Spleen (tissue), 13 donors: ENCODE measurements at regions of chr18 and their contacts with region 1.

Region 1: DNA sequence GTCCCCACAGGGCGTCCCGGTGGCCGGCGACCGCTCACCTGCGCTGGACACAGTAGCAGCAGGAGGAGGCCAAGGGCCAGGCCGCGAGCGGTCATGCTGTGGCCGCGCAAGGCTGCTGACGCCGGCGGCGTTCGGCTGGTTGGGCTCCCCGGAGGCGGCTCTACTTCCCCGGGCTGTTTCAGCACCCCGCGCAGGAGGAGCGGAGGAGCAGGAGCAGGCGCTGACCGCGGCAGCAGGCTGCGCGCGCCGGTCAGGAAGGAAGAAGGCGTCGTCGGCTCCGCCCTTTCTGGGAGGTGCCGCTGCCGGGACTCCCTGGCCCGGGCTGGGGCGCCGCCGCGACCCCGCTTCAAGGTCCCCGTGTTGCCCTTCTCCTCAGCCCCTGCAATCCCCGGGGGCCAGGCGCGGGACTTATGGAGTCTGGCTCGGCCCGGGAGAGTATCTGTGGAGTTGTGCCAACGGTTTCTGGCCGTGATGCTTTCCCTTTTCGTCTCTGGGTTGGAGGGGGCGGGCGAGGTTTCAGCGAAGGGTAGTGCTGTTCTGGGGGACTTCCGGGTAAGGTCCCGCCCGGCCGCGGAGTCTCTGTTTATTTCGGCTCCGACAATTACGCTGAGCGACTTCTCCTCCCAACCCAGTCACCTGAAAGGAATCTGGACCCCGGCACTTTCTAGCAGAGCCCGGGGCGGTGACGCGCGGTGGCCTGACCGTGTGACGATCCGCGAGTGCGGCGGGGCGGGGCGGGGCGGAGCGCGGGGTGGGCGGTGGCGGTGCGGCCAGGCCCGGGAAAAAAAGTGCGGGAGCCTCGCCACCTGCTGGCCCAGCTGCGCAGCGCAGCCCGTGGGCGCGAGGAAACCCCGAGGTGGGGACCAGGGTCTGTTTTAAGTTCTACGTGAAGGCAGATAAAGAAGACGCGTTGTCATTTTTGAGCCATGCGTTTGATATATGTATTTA is at the start of gene NPC1:
- DNase-seq: peak; percentile 99
- H3K4me3 ChIP-seq: peak within 1 kb of the TSS; percentile 64 to 96 (median 88)
- H3K27ac ChIP-seq: peak within 1 kb of the TSS; percentile 97 to 100 (median 99)
- H3K4me1 ChIP-seq: peaks cover 13 to 55% (median 35%) of the 10 kb centered on the region in 6 donors
- H3K27me3 ChIP-seq: peaks cover 0 to 5% (median 0%) of the 10 kb centered on the region in 7 donors
- CTCF ChIP-seq: peak; percentile 82 to 99 (median 98)
- POLR2A ChIP-seq: peak; percentile 25 to 79 (median 71)
- total RNA-seq, gene NPC1: 47.2 to 84.2 (median 68.9) TPM

Region 2: GRCh38 chr18:23178661-23179081 is 407.9 kb before region 1 on chr18:
- intact Hi-C with region 1: no loop called
- DNase-seq: no peak
- H3K4me3 ChIP-seq: no peak overlapping the region
- H3K27ac ChIP-seq: no peak overlapping the region
- H3K4me1 ChIP-seq: peaks cover 0 to 5% (median 0%) of the 10 kb centered on the region in 6 donors
- H3K27me3 ChIP-seq: no peaks in the 10 kb centered on the region
- CTCF ChIP-seq: no peak
- POLR2A ChIP-seq: no peak

Region 3: DNA sequence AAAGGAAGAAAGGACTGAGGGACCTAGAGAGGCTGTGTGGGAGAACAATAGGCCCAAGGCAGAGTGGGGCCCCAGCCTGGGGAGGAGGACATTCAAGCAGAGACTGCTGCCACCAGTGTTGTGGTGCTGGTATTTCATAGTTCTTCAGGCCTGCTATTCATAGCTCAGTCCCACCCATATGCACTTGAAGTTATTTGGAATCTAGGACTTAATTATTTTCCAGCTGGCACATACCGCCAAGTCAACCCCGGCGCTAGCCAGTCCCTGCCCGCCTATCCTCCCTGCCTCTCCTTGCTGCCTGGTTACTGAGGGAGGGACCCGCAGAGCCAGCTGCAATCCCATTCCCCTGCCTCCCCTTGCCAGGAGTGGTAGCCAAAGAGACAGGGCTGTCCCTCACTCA is 310.1 kb before region 1 on chr18:
- intact Hi-C with region 1: no loop called
- DNase-seq: no peak
- H3K4me3 ChIP-seq: no peak overlapping the region
- H3K27ac ChIP-seq: no peak overlapping the region
- H3K4me1 ChIP-seq: peaks cover 0 to 3% (median 0%) of the 10 kb centered on the region in 6 donors
- H3K27me3 ChIP-seq: no peaks in the 10 kb centered on the region
- CTCF ChIP-seq: no peak
- POLR2A ChIP-seq: no peak

Region 4: DNA sequence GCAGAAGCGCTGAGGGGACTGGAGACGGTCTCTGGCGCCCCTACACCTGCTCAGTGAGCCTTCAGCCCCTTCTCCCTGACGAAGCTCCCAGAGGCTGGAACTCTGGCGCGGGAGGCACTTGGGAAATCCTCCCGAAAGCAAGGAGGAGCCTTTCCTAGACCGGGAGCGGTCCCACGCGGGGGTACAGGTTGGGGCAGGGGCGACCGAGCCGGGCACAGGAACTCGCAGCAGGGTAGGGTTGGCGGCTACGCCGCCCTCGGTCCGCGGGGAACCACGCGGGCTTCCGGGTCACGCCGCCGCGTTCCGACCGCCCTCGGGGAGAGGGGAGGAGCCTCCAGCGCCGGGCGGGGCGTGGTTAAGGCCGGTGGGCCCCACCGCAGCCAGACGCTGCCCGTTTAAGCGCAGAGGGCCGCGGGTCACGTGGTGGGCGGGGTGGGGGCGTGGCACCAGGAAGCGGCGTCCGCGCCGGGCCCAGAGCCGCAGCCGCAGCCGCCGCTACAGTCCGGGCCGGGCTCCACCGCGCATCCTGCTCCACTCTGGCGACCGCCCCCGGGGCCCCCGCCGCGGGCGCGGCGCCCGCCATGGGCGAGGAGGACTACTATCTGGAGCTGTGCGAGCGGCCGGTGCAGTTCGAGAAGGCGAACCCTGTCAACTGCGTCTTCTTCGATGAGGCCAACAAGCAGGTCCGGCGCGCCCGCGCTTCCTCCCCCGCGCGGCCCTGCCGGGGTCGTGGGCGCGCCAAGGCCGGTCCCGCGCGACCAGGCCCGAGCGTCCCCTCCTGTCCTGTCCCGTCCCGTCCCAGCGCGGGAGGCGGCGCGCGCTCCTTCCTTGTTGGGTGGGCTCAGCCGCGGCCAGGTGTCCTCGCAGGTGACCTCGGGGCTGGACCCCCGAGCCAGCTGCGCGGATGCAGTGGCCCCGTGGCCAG is 83.2 kb before region 1 on chr18 and contains the start of gene RMC1:
- intact Hi-C with region 1: loop called (anchors 5 kb)
- DNase-seq: peak; percentile 100
- H3K4me3 ChIP-seq: peak within 1 kb of the TSS; percentile 72 to 98 (median 95)
- H3K27ac ChIP-seq: peak within 1 kb of the TSS; percentile 95 to 99 (median 96)
- H3K4me1 ChIP-seq: peaks cover 19 to 92% (median 61%) of the 10 kb centered on the region in 6 donors
- H3K27me3 ChIP-seq: no peaks in the 10 kb centered on the region
- CTCF ChIP-seq: peak in 5 of 11 experiments; percentile 10 to 35 (median 20)
- POLR2A ChIP-seq: peak in 2 of 3 donors; percentile 67 to 80
- total RNA-seq, gene RMC1: 29.5 to 55.9 (median 43.6) TPM

Region 5: GRCh38 chr18:23515911-23516546 is 70.5 kb before region 1 on chr18:
- intact Hi-C with region 1: loop called (anchors 5 kb)
- DNase-seq: peak; percentile 88
- H3K4me3 ChIP-seq: no peak overlapping the region
- H3K27ac ChIP-seq: peak overlapping the region in 2 of 8 donors; percentile 1 to 21
- H3K4me1 ChIP-seq: peaks cover 0 to 46% (median 21%) of the 10 kb centered on the region in 6 donors
- H3K27me3 ChIP-seq: no peaks in the 10 kb centered on the region
- CTCF ChIP-seq: peak; percentile 65 to 92 (median 84)
- POLR2A ChIP-seq: no peak